Natural killer cell (primary cell): ENCODE measurements at regions of chr22 and their contacts with region 1.

Region 1: GRCh38 chr22:39502109-39502788 is at the start of gene MIEF1:
- DNase-seq: peak; percentile 89 to 95
- ATAC-seq: peak; percentile 97 to 99 (median 97)
- H3K4me3 ChIP-seq: peak within 1 kb of the TSS; percentile 76
- H3K4me3 Mint-ChIP-seq: peak within 1 kb of the TSS; percentile 91
- H3K27ac ChIP-seq: peak within 1 kb of the TSS; percentile 80
- H3K27ac Mint-ChIP-seq: peak within 1 kb of the TSS; percentile 90 to 94
- H3K4me1 ChIP-seq: peaks cover 26% of the 10 kb centered on the region
- H3K4me1 Mint-ChIP-seq: peaks cover 27 to 50% of the 10 kb centered on the region in 2 donors
- H3K27me3 ChIP-seq: no peaks in the 10 kb centered on the region
- H3K27me3 Mint-ChIP-seq: no peaks in the 10 kb centered on the region
- CTCF ChIP-seq: no peak
- total RNA-seq, gene MIEF1: 16.1 to 27.6 (median 25.1) TPM

Region 2: GRCh38 chr22:39392341-39392948 is 109.8 kb before region 1 on chr22:
- intact Hi-C with region 1: loop called (anchors 10 kb)
- DNase-seq: no peak
- ATAC-seq: no peak
- H3K4me3 ChIP-seq: no peak overlapping the region
- H3K4me3 Mint-ChIP-seq: no peak overlapping the region
- H3K27ac ChIP-seq: no peak overlapping the region
- H3K27ac Mint-ChIP-seq: no peak overlapping the region
- H3K4me1 ChIP-seq: peaks cover 20% of the 10 kb centered on the region
- H3K4me1 Mint-ChIP-seq: peaks cover 6 to 7% of the 10 kb centered on the region in 2 donors
- H3K27me3 ChIP-seq: no peaks in the 10 kb centered on the region
- H3K27me3 Mint-ChIP-seq: no peaks in the 10 kb centered on the region
- CTCF ChIP-seq: no peak

Region 3: GRCh38 chr22:39462443-39463221 is 39.6 kb before region 1 on chr22:
- intact Hi-C with region 1: no loop called
- DNase-seq: no peak
- ATAC-seq: no peak
- H3K4me3 ChIP-seq: no peak overlapping the region
- H3K4me3 Mint-ChIP-seq: no peak overlapping the region
- H3K27ac ChIP-seq: peak overlapping the region; percentile 31
- H3K27ac Mint-ChIP-seq: no peak overlapping the region
- H3K4me1 ChIP-seq: peaks cover 21% of the 10 kb centered on the region
- H3K4me1 Mint-ChIP-seq: peaks cover 4 to 9% of the 10 kb centered on the region in 2 donors
- H3K27me3 ChIP-seq: peaks cover 10% of the 10 kb centered on the region
- H3K27me3 Mint-ChIP-seq: peaks cover 17 to 32% of the 10 kb centered on the region in 2 donors
- CTCF ChIP-seq: no peak

Region 4: GRCh38 chr22:39520054-39520891 is 18.0 kb after region 1 on chr22 and contains the start of gene ATF4:
- intact Hi-C with region 1: loop called (anchors 1 kb)
- DNase-seq: peak; percentile 92 to 99
- ATAC-seq: peak; percentile 88 to 95 (median 88)
- H3K4me3 ChIP-seq: peak within 1 kb of the TSS; percentile 97
- H3K4me3 Mint-ChIP-seq: peak within 1 kb of the TSS; percentile 98
- H3K27ac ChIP-seq: peak within 1 kb of the TSS; percentile 91
- H3K27ac Mint-ChIP-seq: peak within 1 kb of the TSS; percentile 96 to 98
- H3K4me1 ChIP-seq: peaks cover 45% of the 10 kb centered on the region
- H3K4me1 Mint-ChIP-seq: peaks cover 42% of the 10 kb centered on the region in 2 donors
- H3K27me3 ChIP-seq: no peaks in the 10 kb centered on the region
- H3K27me3 Mint-ChIP-seq: no peaks in the 10 kb centered on the region
- CTCF ChIP-seq: no peak
- total RNA-seq, gene ATF4: 235 to 242 (median 238) TPM